Dorsolateral prefrontal cortex (tissue), 120 donors: ENCODE measurements at regions of chr3 and their contacts with region 1.

Region 1: GRCh38 chr3:192566706-192567290 is 160.5 kb downstream of the FGF12 start:
- DNase-seq: peak; percentile 60 to 94 (median 83)
- H3K4me3 ChIP-seq: no peak overlapping the region
- H3K27ac ChIP-seq: peak overlapping the region in 1 of 59 donors; percentile 11
- H3K27me3 ChIP-seq: peaks cover 0 to 19% (median 0%) of the 10 kb centered on the region in 45 donors
- CTCF ChIP-seq: peak; percentile 61 to 100 (median 92)

Region 2: GRCh38 chr3:192482809-192483208 is 84.0 kb before region 1 on chr3:
- intact Hi-C with region 1: no loop called
- DNase-seq: no peak
- H3K4me3 ChIP-seq: no peak overlapping the region
- H3K27ac ChIP-seq: no peak overlapping the region
- H3K27me3 ChIP-seq: peaks cover 0 to 6% (median 0%) of the 10 kb centered on the region in 45 donors
- CTCF ChIP-seq: no peak

Region 3: GRCh38 chr3:192727032-192727847 is 160.4 kb after region 1 on chr3 and contains the start of gene FGF12:
- intact Hi-C with region 1: loop called in 1 of 2 experiments (anchors 5 kb)
- DNase-seq: peak; percentile 74 to 95 (median 85)
- H3K4me3 ChIP-seq: peak within 1 kb of the TSS; percentile 48 to 80 (median 66)
- H3K27ac ChIP-seq: peak within 1 kb of the TSS in 50 of 59 donors; percentile 28 to 87 (median 73)
- H3K27me3 ChIP-seq: peaks cover 0 to 8% (median 0%) of the 10 kb centered on the region in 45 donors
- CTCF ChIP-seq: peak in 10 of 56 donors; percentile 7 to 29 (median 15)
- total RNA-seq, gene FGF12: 53.8 to 245 (median 175) TPM

Region 4: GRCh38 chr3:192772240-192772894 is 205.6 kb after region 1 on chr3:
- intact Hi-C with region 1: loop called (anchors 10 kb)
- DNase-seq: peak in 8 of 10 donors; percentile 7 to 61 (median 52)
- H3K4me3 ChIP-seq: no peak overlapping the region
- H3K27ac ChIP-seq: no peak overlapping the region
- H3K27me3 ChIP-seq: peaks cover 0 to 6% (median 0%) of the 10 kb centered on the region in 45 donors
- CTCF ChIP-seq: peak in 51 of 56 donors; percentile 10 to 72 (median 48)

Region 5: DNA sequence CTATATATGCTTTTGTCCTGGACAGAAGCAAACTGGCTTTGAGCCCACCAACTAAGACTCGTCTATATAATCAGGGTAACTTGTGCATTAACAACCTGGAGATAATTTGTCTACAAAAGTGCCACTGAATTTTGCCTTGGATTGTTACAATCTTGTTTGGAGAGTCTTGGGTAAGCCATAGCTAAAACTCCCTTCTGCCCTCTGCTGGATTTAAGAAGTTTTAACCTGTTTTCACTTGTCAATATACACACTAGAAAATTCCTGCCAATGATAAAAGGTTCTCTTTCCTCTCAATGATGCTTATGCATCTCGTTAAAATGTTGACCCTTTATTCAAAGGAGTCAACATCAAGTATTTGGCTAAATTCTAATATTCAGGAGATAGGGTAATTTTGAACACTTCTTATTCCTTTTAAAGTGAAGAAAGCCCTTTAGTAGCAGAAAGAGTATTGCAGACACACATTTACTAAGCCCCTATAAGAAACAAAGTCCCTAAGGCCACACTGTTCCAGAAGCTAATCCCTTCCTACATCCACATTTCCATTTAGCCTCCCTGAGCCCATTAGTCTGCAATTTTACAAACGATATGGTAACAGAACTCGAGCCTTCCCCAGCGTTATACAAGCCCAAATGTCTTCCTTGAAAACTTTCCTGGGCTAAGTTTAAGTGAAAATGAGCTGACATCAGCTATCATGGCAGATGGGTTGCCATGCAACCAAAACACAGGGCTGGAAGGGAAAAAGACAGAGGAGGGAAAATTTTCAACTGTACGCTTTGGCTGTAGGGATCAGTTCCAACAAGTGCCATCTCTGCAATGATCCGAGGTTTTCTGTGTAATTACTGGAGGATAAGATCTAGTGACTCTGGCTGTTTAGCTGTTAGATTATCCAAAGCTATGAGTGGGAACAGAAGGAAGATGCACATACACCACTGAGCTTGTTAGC is 236.4 kb after region 1 on chr3:
- intact Hi-C with region 1: loop called (anchors 1 to 5 kb)
- DNase-seq: peak in 1 of 10 donors; percentile 33
- H3K4me3 ChIP-seq: peak overlapping the region in 2 of 59 donors; percentile 6 to 11
- H3K27ac ChIP-seq: peak overlapping the region in 26 of 59 donors; percentile 0 to 67 (median 28)
- H3K27me3 ChIP-seq: no peaks in the 10 kb centered on the region
- CTCF ChIP-seq: peak; percentile 46 to 82 (median 69)

Region 6: GRCh38 chr3:193572426-193572908 is 1005.7 kb after region 1 on chr3:
- intact Hi-C with region 1: loop called in 1 of 2 experiments (anchors 5 kb)
- DNase-seq: peak in 8 of 10 donors; percentile 51 to 82 (median 64)
- H3K4me3 ChIP-seq: no peak overlapping the region
- H3K27ac ChIP-seq: no peak overlapping the region
- H3K27me3 ChIP-seq: no peaks in the 10 kb centered on the region
- CTCF ChIP-seq: peak; percentile 66 to 96 (median 86)